ENCODE measurements at regions of chr1 and their contacts with region 1.

Region 1: GRCh38 chr1:156728597-156729462 is at the start of gene ISG20L2:
- DNase-seq: peak; percentile 84
- H3K4me3 ChIP-seq: peak within 1 kb of the TSS; percentile 99
- CTCF ChIP-seq: no peak

Region 2: DNA sequence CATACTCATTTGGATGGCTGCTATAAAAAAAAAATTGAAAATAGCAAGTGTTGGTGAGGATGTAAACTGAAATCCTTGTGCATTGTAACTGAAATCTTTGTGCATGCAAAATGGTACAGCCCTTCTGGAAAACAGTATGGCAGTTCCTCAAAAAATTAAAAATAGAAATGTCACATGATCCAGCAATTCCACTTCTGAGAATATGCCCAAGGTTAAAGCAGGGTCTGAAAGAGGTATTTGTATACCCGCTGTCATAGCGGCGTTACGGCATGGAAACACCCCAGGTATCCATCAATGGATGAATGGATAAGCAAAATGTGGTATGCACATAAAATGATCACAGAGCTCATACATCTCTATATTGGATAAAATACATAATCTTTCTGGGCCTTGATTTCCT is 1291.4 kb before region 1 on chr1:
- CTCF ChIA-PET with region 1: no interaction called
- POLR2A ChIA-PET with region 1: no interaction called
- DNase-seq: no peak
- H3K4me3 ChIP-seq: no peak overlapping the region
- CTCF ChIP-seq: no peak

Region 3: GRCh38 chr1:156510709-156511108 is 218.1 kb before region 1 on chr1:
- CTCF ChIA-PET with region 1: no interaction called
- POLR2A ChIA-PET with region 1: no interaction called
- DNase-seq: peak; percentile 74
- H3K4me3 ChIP-seq: no peak overlapping the region
- CTCF ChIP-seq: no peak

Region 4: GRCh38 chr1:156625436-156626078 is 103.3 kb before region 1 on chr1:
- CTCF ChIA-PET with region 1: interaction called, 22 read pairs
- POLR2A ChIA-PET with region 1: no interaction called
- DNase-seq: no peak
- H3K4me3 ChIP-seq: no peak overlapping the region
- CTCF ChIP-seq: peak; percentile 74

Region 5: GRCh38 chr1:156740679-156741612 is 12.1 kb after region 1 on chr1 and contains the start of gene MRPL24:
- CTCF ChIA-PET with region 1: interaction called, 36 read pairs
- POLR2A ChIA-PET with region 1: interaction called, 16 read pairs
- DNase-seq: peak; percentile 96
- H3K4me3 ChIP-seq: peak within 1 kb of the TSS; percentile 93
- CTCF ChIP-seq: no peak

Region 6: DNA sequence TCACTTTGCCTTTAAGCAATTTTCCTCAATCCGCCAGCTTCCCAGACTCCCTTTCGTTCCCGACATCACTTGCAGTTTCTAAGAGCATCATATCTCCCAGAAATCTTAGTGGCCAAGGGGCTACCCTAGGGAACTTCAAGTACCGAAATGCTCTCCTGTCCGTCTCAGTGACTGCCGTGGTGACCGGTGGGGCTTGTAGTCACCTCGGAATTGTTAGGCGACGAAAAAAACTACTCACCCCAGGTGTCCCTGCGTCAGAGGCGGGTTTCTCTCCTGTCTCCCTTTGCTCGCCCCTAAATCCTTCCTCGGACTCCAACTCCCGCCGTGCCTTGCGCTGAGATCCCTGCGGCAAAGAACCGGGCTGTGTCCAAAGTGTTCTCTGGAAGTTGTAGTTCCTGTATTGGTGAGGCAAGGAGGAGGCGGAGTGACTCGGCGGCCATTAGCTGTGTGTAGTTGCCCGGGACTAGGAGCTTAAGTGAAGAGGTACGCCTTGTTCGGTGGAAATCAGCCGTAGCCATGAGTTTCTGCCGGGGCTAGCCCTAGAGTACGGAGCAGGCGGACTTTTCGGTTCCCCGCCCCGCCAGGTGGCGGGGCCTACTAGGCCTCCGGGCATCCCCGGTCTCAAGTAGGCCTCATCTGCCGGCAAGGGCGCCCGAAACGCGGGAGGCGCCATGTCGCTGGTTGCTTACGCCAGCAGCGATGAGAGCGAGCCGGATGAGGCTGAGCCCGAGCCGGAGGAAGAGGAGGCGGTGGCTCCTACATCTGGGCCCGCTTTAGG is 38.5 kb after region 1 on chr1 and contains the start of gene PRCC:
- CTCF ChIA-PET with region 1: interaction called, 69 read pairs
- POLR2A ChIA-PET with region 1: interaction called, 5 read pairs
- DNase-seq: peak; percentile 99
- H3K4me3 ChIP-seq: peak within 1 kb of the TSS; percentile 95
- CTCF ChIP-seq: no peak

Region 7: DNA sequence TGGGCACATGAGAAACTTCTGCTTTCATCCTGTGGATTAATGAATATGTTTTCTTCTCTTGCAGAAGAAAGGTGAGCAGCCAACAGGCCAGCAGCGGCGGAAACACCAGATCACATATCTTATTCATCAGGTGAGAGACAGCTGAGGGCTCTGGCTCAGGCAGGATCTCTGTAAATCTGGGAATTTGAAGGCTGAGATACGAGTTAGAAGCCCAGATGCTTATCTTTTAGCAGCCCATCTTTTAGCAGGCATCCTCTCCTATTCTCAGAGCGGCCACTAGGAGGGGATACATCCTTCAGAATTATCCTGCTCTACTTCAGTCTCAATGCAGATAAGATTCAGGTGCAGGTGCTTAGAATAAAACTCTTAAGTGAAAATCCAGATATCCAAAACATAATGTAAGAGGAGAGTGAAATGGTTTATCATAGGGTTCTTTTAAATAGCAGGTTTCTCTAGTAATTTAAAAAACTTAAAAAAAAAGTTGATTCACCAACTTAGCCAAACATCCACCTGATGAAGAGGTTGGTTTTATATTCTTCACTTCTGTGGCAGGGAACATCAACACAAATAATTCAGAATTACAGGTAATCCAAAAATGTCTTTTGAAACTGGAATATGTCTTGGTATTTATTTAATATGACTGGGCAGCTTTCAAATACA is 68.5 kb after region 1 on chr1:
- CTCF ChIA-PET with region 1: interaction called, 108 read pairs
- POLR2A ChIA-PET with region 1: no interaction called
- DNase-seq: no peak
- H3K4me3 ChIP-seq: no peak overlapping the region
- CTCF ChIP-seq: peak; percentile 73

Region 8: DNA sequence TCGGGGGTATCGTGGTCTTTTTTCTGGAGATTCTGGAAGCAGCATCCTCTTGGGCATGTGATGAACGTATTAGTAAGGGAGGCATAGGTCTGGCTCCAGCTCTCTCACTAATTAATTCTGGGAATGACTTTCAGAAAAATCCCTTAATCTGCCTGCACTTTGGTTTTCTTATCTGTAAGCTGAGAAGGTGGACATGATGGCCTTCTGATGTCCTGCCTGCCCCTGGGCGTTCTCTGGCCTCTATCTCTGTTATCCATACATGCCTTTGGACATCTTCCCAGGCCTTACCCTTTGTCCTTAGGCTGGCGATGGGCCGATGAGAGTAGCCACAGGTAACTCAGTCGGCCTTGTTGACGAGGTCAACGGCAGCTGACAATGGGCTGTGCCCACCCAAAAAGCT is 140.6 kb after region 1 on chr1:
- CTCF ChIA-PET with region 1: interaction called, 192 read pairs
- POLR2A ChIA-PET with region 1: no interaction called
- DNase-seq: no peak
- H3K4me3 ChIP-seq: no peak overlapping the region
- CTCF ChIP-seq: no peak

Region 9: DNA sequence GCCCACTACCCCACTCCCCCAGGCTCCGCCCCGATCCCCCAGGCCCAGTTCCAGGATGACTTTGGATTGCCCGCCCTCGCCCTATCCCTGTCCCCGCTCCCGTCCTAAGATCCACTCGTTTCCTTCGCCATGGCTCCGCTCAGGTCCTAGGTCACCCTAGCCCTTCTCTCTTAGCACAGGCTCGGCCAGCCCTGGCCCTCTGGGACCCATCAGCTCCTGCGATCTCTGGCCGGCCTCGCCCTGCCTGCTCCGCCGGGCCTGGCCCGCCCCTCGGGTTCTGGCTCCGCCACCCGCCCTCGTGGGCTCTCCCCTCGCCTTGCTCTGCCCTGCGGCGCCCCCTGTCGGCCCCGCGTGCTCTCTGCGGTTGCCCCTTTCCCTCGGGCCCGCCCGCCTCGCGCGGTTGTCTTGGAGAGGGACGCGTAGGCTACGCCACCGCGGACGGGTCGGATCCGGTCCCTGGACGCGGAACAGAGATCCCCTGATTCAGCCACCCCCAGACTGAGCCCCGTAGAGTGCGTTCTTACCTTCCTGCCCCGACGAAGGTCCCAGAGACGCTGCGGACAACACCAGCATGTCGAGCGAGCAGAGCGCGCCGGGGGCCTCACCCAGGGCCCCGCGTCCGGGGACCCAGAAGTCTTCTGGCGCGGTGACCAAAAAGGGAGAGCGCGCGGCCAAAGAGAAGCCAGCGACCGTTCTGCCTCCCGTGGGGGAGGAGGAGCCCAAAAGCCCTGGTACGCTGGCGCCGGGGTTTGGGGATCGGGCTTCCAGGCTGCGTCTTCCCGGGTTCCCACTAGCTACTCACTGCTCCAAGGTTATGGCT is 191.6 kb after region 1 on chr1 and contains the start of gene LRRC71:
- CTCF ChIA-PET with region 1: interaction called, 78 read pairs
- POLR2A ChIA-PET with region 1: no interaction called
- DNase-seq: no peak
- H3K4me3 ChIP-seq: peak within 1 kb of the TSS; percentile 30; the same call in 1 of the 2 replicates
- CTCF ChIP-seq: peak; percentile 98

Measured in AG04449 (cell line).